ENCODE measurements at regions of chr19 and their contacts with region 1.

Region 1: GRCh38 chr19:58400916-58401839 is 5.7 kb downstream of the RNF225 start:
- DNase-seq: peak; percentile 98 to 100 (median 99)
- ATAC-seq: peak; percentile 95
- H3K4me3 ChIP-seq: peak overlapping the region; percentile 75
- H3K4me3 Mint-ChIP-seq: peak overlapping the region; percentile 88
- H3K27ac ChIP-seq: peak overlapping the region; percentile 59 to 94
- H3K27ac Mint-ChIP-seq: peak overlapping the region; percentile 86
- H3K4me1 ChIP-seq: peaks cover 20% of the 10 kb centered on the region
- H3K4me1 Mint-ChIP-seq: peaks cover 9% of the 10 kb centered on the region
- H3K27me3 ChIP-seq: peaks cover 11 to 15% of the 10 kb centered on the region in 2 experiments
- H3K27me3 Mint-ChIP-seq: peaks cover 25% of the 10 kb centered on the region
- CTCF ChIP-seq: no peak

Region 2: DNA sequence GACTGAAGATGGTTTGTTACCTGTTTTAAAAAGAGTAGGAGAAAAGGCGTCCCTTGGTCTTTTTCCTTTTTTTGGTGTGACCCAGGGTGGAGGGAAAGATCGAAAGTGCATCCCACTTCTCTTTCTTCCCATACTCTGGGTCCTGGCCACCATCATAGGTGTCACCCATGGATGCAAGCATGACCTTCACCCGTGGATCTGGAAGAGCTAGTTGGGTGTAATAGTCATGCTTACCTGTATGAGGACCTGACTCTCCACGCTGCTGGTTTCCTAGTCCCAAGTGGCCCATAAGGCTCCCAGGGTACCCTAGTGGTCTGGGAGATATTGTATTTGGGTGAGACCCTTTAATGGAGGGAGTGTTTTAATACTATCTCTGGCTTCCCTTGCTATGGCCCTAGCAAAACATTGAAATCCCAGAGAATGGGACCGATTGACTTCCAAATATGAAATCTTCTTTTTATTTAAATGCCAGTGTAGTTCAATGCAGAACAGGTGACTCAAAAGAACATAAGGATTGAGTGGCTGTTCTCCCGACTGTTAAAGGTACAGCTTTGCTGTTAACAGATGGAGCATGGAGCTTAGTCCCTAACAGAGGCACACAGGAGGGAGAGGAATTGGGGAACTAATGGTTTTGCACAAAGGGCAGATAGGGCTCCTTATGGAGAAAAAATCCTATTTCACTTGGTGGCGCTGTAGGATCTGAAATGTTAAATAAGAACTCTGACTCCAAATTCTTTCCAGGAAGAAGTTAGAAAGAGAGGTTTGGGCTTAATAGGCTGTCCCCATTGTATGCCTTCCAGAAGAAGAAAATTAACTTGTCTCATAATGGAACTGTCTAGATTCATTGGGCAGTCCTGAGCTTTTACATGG is 834.5 kb before region 1 on chr19:
- CTCF ChIA-PET with region 1: no interaction called
- POLR2A ChIA-PET with region 1: no interaction called
- intact Hi-C with region 1: no loop called
- DNase-seq: peak in 1 of 14 experiments; percentile 11
- ATAC-seq: no peak
- H3K4me3 ChIP-seq: no peak overlapping the region
- H3K4me3 Mint-ChIP-seq: no peak overlapping the region
- H3K27ac ChIP-seq: no peak overlapping the region
- H3K27ac Mint-ChIP-seq: no peak overlapping the region
- H3K4me1 ChIP-seq: no peaks in the 10 kb centered on the region
- H3K4me1 Mint-ChIP-seq: no peaks in the 10 kb centered on the region
- H3K27me3 ChIP-seq: peaks cover 0 to 5% of the 10 kb centered on the region in 2 experiments
- H3K27me3 Mint-ChIP-seq: peaks cover 5% of the 10 kb centered on the region
- CTCF ChIP-seq: no peak

Region 3: GRCh38 chr19:58386576-58387337 is 14.4 kb before region 1 on chr19 and contains the start of gene RPS5:
- CTCF ChIA-PET with region 1: interaction called, 3 read pairs
- POLR2A ChIA-PET with region 1: no interaction called
- intact Hi-C with region 1: loop called (anchors 1 kb)
- DNase-seq: peak; percentile 90 to 100 (median 95)
- ATAC-seq: peak; percentile 90
- H3K4me3 ChIP-seq: peak within 1 kb of the TSS; percentile 79
- H3K4me3 Mint-ChIP-seq: peak within 1 kb of the TSS; percentile 99
- H3K27ac ChIP-seq: peak within 1 kb of the TSS; percentile 93 to 97
- H3K27ac Mint-ChIP-seq: peak within 1 kb of the TSS; percentile 98
- H3K4me1 ChIP-seq: peaks cover 53% of the 10 kb centered on the region
- H3K4me1 Mint-ChIP-seq: peaks cover 47% of the 10 kb centered on the region
- H3K27me3 ChIP-seq: no peaks in the 10 kb centered on the region
- H3K27me3 Mint-ChIP-seq: no peaks in the 10 kb centered on the region
- CTCF ChIP-seq: no peak
- total RNA-seq, gene RPS5: 1,619 to 1,646 TPM

Region 4: DNA sequence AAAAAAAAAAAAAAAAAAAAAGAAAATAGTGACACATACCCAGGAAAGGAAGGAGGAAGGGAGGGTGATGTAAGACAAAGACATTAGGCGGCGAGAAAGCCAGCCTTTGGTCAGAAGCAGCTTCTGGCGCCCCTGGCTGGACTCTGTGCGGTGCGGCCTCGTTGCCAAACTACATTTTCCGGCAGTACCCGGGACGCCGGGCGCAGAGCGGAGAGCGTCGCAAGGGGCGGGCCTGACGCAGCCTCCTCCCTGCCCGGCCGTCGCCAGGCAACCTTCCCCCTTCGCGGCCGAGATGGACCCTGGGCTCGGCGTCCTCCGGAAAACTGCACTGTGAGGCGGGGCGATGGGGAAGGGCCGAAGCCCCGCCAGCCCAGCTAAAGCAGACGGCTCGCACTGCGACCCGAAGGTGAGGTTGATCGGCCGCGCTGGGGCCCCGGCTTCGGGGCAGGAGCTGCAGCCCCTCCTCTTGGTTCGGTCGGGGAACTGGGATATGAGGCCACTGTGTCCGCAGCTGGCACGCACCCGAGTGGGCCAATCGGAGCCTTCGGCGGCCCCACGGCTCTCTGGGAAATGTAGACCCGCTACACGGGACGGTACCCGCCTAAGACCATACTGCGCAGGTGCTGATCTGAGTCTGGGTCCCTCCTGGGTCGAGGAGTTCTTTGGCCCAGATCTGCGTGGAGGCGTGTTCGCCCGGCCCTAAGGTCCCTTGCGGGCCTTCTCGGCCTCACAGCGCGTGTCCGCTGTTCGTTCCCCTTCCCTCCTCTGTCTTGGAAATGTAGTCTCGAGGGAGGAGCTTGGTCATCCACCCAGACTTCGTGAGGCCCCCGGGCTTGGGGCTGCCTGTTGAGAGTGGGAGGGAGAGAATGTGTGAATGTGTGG is 174.2 kb after region 1 on chr19:
- CTCF ChIA-PET with region 1: no interaction called
- POLR2A ChIA-PET with region 1: no interaction called
- intact Hi-C with region 1: no loop called
- DNase-seq: peak; percentile 47 to 92 (median 66)
- ATAC-seq: peak; percentile 23
- H3K4me3 ChIP-seq: peak overlapping the region; percentile 91
- H3K4me3 Mint-ChIP-seq: peak overlapping the region; percentile 89
- H3K27ac ChIP-seq: peak overlapping the region; percentile 91 to 98
- H3K27ac Mint-ChIP-seq: peak overlapping the region; percentile 96
- H3K4me1 ChIP-seq: peaks cover 49% of the 10 kb centered on the region
- H3K4me1 Mint-ChIP-seq: peaks cover 53% of the 10 kb centered on the region
- H3K27me3 ChIP-seq: no peaks in the 10 kb centered on the region
- H3K27me3 Mint-ChIP-seq: no peaks in the 10 kb centered on the region
- CTCF ChIP-seq: no peak